A673 (cell line): ENCODE measurements at regions of chrX and their contacts with region 1.

Region 1: GRCh38 chrX:103483720-103484119 is 35.6 kb downstream of the RAB40A start:
- DNase-seq: no peak
- H3K4me3 ChIP-seq: no peak overlapping the region
- H3K27ac ChIP-seq: no peak overlapping the region
- H3K4me1 ChIP-seq: no peaks in the 10 kb centered on the region
- H3K27me3 ChIP-seq: no peaks in the 10 kb centered on the region
- CTCF ChIP-seq: no peak

Region 2: GRCh38 chrX:103495786-103496185 is 12.1 kb after region 1 on chrX:
- CTCF ChIA-PET with region 1: no interaction called
- POLR2A ChIA-PET with region 1: interaction called, 18 read pairs
- intact Hi-C with region 1: no loop called
- DNase-seq: no peak
- H3K4me3 ChIP-seq: no peak overlapping the region
- H3K27ac ChIP-seq: no peak overlapping the region
- H3K4me1 ChIP-seq: no peaks in the 10 kb centered on the region
- H3K27me3 ChIP-seq: no peaks in the 10 kb centered on the region
- CTCF ChIP-seq: no peak